Activated CD4-positive, alpha-beta memory T cell treated with anti-CD3 and anti-CD28 coated beads, Interleukin-2, amount 10 ng/mL, durations not matched to agents 7 days and 5 days (primary cell): ENCODE measurements at regions of chr2 and their contacts with region 1.

Region 1: GRCh38 chr2:191677646-191678436 is at the start of gene NABP1:
- DNase-seq: peak; percentile 99
- H3K4me3 Mint-ChIP-seq: peak within 1 kb of the TSS; percentile 88
- H3K27ac Mint-ChIP-seq: peak within 1 kb of the TSS; percentile 98
- H3K4me1 Mint-ChIP-seq: peaks cover 50% of the 10 kb centered on the region
- H3K27me3 Mint-ChIP-seq: no peaks in the 10 kb centered on the region
- total RNA-seq, gene NABP1: 73.5 to 73.7 TPM

Region 2: GRCh38 chr2:191114403-191114886 is 563.4 kb before region 1 on chr2:
- CTCF ChIA-PET with region 1: interaction called, 3 read pairs
- POLR2A ChIA-PET with region 1: interaction called, 30 read pairs
- DNase-seq: peak; percentile 39
- H3K4me3 Mint-ChIP-seq: peak overlapping the region; percentile 61
- H3K27ac Mint-ChIP-seq: peak overlapping the region; percentile 94
- H3K4me1 Mint-ChIP-seq: peaks cover 71% of the 10 kb centered on the region
- H3K27me3 Mint-ChIP-seq: no peaks in the 10 kb centered on the region

Region 3: DNA sequence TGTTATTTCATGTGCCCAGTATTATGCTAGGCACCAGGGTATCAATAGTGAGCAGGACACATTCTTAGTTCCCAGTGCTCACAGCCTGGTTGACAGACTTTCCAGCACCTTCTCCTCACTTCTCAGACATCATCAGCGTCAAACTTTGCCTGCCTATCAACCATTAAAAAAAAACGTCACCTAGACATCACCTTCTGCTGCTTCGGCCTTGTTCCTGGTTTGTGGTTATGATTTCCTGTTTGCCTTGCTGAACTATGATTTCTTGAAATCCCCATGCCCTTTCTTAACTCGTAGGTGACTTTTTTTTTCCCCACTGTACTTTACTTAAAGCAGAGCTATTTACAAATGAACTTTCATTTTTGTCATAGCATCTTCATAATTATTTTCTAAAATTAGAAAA is 60.3 kb before region 1 on chr2:
- CTCF ChIA-PET with region 1: interaction called, 3 read pairs
- POLR2A ChIA-PET with region 1: interaction called, 176 read pairs
- DNase-seq: peak; percentile 47
- H3K4me3 Mint-ChIP-seq: peak overlapping the region; percentile 5
- H3K27ac Mint-ChIP-seq: peak overlapping the region; percentile 71
- H3K4me1 Mint-ChIP-seq: peaks cover 31% of the 10 kb centered on the region
- H3K27me3 Mint-ChIP-seq: no peaks in the 10 kb centered on the region

Region 4: GRCh38 chr2:191637182-191638078 is 40.4 kb before region 1 on chr2:
- CTCF ChIA-PET with region 1: interaction called, 13 read pairs
- POLR2A ChIA-PET with region 1: interaction called, 298 read pairs
- DNase-seq: no peak
- H3K4me3 Mint-ChIP-seq: peak overlapping the region; percentile 42
- H3K27ac Mint-ChIP-seq: peak overlapping the region; percentile 67
- H3K4me1 Mint-ChIP-seq: peaks cover 46% of the 10 kb centered on the region
- H3K27me3 Mint-ChIP-seq: peaks cover 48% of the 10 kb centered on the region

Region 5: DNA sequence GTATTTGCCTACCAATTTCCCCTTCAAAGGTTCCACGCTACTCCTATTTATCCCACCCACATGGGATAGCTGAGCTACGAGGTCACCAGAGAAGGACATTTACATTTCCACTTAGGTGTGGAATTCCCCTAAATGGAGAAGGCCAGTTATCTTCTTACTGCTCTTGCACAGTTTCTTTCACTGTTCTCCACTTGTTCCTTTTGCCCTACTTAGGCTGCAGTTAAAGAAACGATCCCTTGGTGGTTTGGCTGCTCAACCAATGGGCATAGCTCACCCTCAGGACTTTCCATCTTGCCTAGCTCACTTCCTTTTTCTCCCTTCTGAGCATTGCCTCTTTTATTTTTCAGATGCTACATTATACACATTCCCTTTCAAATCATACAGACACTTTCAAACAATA is 11.1 kb before region 1 on chr2:
- CTCF ChIA-PET with region 1: no interaction called
- POLR2A ChIA-PET with region 1: interaction called, 58 read pairs
- DNase-seq: no peak
- H3K4me3 Mint-ChIP-seq: no peak overlapping the region
- H3K27ac Mint-ChIP-seq: no peak overlapping the region
- H3K4me1 Mint-ChIP-seq: peaks cover 19% of the 10 kb centered on the region
- H3K27me3 Mint-ChIP-seq: no peaks in the 10 kb centered on the region